ENCODE measurements at regions of chr12 and their contacts with region 1.

Region 1: DNA sequence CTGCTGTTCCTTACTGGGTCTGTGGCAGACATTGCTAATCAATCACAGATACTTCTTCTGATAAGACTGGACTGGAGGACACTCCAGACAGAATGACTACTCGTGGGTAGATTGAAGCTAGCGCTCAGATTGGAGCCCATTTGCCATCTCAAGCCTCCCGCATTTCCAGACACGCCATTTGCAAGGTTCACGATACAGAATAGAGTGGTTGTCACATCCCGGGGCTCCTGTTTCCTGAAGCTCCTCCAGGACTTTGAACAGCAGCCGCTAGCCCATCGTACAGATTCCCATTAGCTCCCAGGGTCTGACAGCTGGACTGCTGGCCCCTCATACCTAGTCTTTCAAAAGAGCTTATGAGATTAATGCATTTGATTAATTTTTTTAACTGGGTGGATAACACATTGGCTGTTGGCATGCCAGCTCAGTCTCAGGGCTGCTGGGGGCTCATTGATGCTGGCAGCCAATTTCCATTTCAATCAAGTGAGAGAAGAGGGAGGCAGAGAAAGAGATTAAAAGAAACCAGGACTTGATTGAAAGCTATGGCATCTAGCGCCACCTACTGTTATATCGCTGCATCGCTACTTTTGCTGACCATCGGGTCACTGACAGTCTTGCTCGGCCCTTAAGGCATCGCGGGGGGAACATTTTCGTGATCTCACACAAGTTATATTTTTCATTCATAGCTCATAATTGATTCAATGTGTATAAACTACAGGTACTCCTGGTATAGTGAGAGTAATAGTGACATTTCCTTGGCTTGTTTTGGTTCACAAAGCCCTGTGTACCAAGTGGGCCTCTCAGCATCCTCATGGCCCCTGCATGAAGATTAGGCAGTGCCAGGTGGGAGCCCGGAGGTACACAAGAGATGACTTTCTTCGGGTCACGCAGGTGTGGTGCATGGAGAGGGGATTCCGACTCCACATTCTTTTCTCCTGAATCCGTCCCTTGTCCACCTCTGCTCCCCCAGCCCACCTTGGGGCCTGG is 78.6 kb downstream of the CCDC60 start:
- DNase-seq: peak; percentile 67
- H3K4me3 Mint-ChIP-seq: no peak overlapping the region
- H3K27ac Mint-ChIP-seq: no peak overlapping the region
- H3K4me1 Mint-ChIP-seq: no peaks in the 10 kb centered on the region
- H3K27me3 Mint-ChIP-seq: peaks cover 83% of the 10 kb centered on the region
- CTCF ChIP-seq: peak; percentile 76

Region 2: DNA sequence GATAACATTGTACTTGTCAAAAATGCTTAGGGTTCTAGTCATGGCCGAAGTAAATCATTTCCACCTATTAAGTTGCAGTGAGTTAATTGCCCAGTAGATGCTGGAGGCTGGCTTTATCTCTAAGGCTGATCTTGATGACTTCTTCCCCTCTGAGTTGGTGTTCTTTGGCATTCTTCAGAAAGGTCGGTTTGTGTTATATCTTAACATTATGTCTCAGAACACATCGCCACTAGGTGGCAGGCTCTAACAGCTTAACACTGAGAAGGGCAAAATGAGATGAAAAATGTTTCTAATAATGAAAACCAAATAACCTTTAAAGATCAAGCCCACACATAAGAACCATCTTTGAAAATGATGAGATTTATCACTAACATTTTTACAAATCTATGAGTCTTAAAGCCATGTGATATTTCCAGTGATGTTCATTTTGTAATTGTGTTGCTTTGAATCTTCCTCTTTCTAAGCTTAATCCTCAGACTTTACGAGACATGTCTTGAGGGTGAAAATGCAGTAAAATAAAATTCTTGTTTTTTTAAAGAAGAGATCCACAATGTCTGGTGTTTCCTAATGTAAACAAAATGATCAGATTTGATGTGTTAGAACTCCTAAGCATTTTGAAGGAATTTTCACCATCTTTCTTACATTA is 1008.1 kb before region 1 on chr12:
- CTCF ChIA-PET with region 1: no interaction called
- intact Hi-C with region 1: loop called (anchors 10 kb)
- DNase-seq: peak; percentile 73
- H3K4me3 Mint-ChIP-seq: no peak overlapping the region
- H3K27ac Mint-ChIP-seq: no peak overlapping the region
- H3K4me1 Mint-ChIP-seq: no peaks in the 10 kb centered on the region
- H3K27me3 Mint-ChIP-seq: no peaks in the 10 kb centered on the region
- CTCF ChIP-seq: peak; percentile 65

Region 3: GRCh38 chr12:118979763-118980406 is 433.2 kb before region 1 on chr12:
- CTCF ChIA-PET with region 1: no interaction called
- intact Hi-C with region 1: loop called (anchors 1 kb)
- DNase-seq: peak; percentile 60
- H3K4me3 Mint-ChIP-seq: no peak overlapping the region
- H3K27ac Mint-ChIP-seq: no peak overlapping the region
- H3K4me1 Mint-ChIP-seq: no peaks in the 10 kb centered on the region
- H3K27me3 Mint-ChIP-seq: peaks cover 41% of the 10 kb centered on the region
- CTCF ChIP-seq: peak; percentile 46

Region 4: DNA sequence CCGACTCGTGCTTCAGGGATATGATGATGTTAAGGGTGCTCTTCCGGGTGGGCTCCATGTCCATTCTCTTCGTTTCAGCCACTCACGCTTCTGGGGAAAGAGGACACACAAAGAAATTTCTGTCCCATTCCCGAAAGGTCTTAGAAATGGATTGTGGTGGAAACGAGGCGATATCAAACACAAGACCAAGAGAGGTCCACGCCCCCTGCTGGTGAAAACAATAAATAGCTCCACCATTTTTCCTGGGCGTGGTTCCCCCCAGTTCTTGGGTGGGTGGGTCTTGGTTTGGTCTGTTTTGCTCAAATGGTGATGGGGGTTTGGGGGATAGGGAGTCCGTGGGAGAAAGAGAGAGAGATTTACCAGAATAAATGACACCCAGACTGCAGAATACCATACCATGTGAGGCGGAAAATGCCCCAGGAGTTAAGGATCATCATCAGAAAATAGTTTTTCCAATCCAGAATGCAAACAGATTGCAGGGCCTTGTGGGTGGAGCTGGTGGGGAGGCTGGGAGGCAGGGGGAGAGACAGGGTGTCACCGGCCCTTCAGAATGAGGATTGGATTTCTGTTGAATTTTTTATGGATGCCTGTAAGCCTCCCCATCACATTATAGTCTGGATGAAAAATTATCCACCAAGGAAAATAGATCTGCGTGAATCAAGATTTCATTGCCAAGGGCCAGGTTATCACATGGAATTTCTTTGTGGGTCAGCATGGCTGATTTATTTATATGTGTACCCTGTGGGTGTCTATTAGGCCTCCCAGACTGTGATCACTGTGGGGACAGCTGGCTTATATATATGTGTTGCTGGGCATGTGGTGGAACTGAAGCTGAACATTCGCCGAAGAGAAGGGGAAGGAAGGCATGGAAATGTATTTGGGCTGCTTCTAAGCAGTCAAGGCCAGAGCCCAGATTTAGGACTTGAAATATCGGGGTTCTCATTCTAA is 376.0 kb before region 1 on chr12:
- CTCF ChIA-PET with region 1: no interaction called
- intact Hi-C with region 1: loop called (anchors 5 kb)
- DNase-seq: peak; percentile 37
- H3K4me3 Mint-ChIP-seq: no peak overlapping the region
- H3K27ac Mint-ChIP-seq: no peak overlapping the region
- H3K4me1 Mint-ChIP-seq: no peaks in the 10 kb centered on the region
- H3K27me3 Mint-ChIP-seq: no peaks in the 10 kb centered on the region
- CTCF ChIP-seq: peak; percentile 31

Region 5: GRCh38 chr12:119115296-119115905 is 297.7 kb before region 1 on chr12:
- CTCF ChIA-PET with region 1: interaction called, 4 read pairs
- intact Hi-C with region 1: loop called (anchors 1 kb)
- DNase-seq: peak; percentile 63
- H3K4me3 Mint-ChIP-seq: no peak overlapping the region
- H3K27ac Mint-ChIP-seq: no peak overlapping the region
- H3K4me1 Mint-ChIP-seq: no peaks in the 10 kb centered on the region
- H3K27me3 Mint-ChIP-seq: peaks cover 28% of the 10 kb centered on the region
- CTCF ChIP-seq: peak; percentile 87

Region 6: DNA sequence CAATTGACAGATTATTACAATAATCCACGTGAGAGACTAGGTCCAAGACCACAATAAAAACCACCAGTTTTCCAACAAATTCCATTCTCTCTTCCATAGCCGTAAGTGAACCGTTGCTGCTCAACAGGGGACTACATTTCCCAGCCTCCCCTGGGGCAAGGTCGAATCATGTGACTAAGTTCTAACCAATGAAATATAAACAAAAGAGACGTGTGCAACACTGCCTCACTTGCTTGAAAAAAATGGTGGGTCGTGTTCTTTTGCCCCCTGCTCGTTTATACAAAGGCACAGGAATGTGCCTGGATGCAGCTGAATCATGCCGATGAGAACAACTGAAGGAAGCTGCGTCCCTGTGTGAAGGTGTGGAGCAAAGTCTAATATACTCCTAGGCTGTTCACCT is 183.3 kb before region 1 on chr12:
- CTCF ChIA-PET with region 1: no interaction called
- intact Hi-C with region 1: loop called (anchors 10 kb)
- DNase-seq: peak; percentile 63
- H3K4me3 Mint-ChIP-seq: peak overlapping the region; percentile 46
- H3K27ac Mint-ChIP-seq: no peak overlapping the region
- H3K4me1 Mint-ChIP-seq: peaks cover 20% of the 10 kb centered on the region
- H3K27me3 Mint-ChIP-seq: peaks cover 54% of the 10 kb centered on the region
- CTCF ChIP-seq: no peak

Region 7: DNA sequence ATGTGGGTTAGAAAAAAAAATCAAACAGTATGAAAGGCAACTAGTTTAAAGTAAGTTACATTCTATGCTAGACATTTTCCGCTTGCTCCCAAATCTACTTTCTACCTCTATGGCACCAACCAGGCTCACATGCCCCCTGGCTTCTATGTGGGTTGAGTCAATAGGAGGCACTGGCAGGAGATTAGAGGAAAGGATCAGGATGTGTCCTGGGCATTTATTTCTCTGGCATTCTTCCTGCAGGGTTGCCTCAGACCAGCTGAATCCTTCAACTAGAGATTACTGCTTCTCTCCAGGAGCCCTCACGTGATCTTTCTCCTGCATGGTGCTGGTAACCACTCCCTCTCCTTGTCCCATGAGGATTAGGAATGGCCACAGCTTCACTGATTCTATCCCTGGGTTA is 93.5 kb before region 1 on chr12:
- CTCF ChIA-PET with region 1: no interaction called
- intact Hi-C with region 1: no loop called
- DNase-seq: no peak
- H3K4me3 Mint-ChIP-seq: no peak overlapping the region
- H3K27ac Mint-ChIP-seq: no peak overlapping the region
- H3K4me1 Mint-ChIP-seq: no peaks in the 10 kb centered on the region
- H3K27me3 Mint-ChIP-seq: peaks cover 31% of the 10 kb centered on the region
- CTCF ChIP-seq: no peak

Region 8: DNA sequence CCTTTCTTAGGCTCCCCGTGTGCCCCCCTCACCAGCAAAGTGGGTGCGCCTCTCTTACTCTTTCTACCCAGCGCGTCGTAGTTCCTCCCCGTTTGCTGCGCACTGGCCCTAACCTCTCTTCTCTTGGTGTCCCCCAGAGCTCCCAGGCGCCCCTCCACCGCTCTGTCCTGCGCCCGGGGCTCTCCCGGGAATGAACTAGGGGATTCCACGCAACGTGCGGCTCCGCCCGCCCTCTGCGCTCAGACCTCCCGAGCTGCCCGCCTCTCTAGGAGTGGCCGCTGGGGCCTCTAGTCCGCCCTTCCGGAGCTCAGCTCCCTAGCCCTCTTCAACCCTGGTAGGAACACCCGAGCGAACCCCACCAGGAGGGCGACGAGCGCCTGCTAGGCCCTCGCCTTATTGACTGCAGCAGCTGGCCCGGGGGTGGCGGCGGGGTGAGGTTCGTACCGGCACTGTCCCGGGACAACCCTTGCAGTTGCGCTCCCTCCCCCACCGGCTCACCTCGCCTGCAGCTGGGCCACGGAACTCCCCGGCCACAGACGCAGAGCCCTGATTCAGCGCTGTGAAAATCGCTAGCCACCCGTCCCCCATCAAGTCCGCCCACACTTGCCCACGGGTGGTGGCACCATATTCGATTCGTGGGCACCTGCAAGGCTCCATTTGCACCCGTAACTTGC is 181.8 kb after region 1 on chr12:
- CTCF ChIA-PET with region 1: no interaction called
- intact Hi-C with region 1: no loop called
- DNase-seq: peak; percentile 38
- H3K4me3 Mint-ChIP-seq: peak overlapping the region; percentile 84
- H3K27ac Mint-ChIP-seq: no peak overlapping the region
- H3K4me1 Mint-ChIP-seq: peaks cover 32% of the 10 kb centered on the region
- H3K27me3 Mint-ChIP-seq: peaks cover 66% of the 10 kb centered on the region
- CTCF ChIP-seq: no peak